Mammary epithelial cell (primary cell): ENCODE measurements at regions of chr4 and their contacts with region 1.

Region 1: GRCh38 chr4:16289897-16290554 is 63.8 kb upstream of the TAPT1 start:
- DNase-seq: no peak
- H3K4me3 ChIP-seq: no peak overlapping the region
- H3K27ac ChIP-seq: no peak overlapping the region
- H3K4me1 ChIP-seq: no peaks in the 10 kb centered on the region
- H3K27me3 ChIP-seq: no peaks in the 10 kb centered on the region
- CTCF ChIP-seq: peak; percentile 53 to 62

Region 2: GRCh38 chr4:16443504-16444088 is 153.6 kb after region 1 on chr4:
- CTCF ChIA-PET with region 1: no interaction called
- dilution Hi-C with region 1: no loop called
- in situ Hi-C with region 1: loop called in 1 of 2 experiments (anchors 10 kb)
- intact Hi-C with region 1: loop called (anchors 1 kb)
- DNase-seq: peak; percentile 12
- H3K4me3 ChIP-seq: no peak overlapping the region
- H3K27ac ChIP-seq: no peak overlapping the region
- H3K4me1 ChIP-seq: no peaks in the 10 kb centered on the region
- H3K27me3 ChIP-seq: no peaks in the 10 kb centered on the region
- CTCF ChIP-seq: peak; percentile 68 to 75

Region 3: GRCh38 chr4:16450724-16451123 is 160.7 kb after region 1 on chr4:
- CTCF ChIA-PET with region 1: no interaction called
- dilution Hi-C with region 1: no loop called
- in situ Hi-C with region 1: loop called in 1 of 2 experiments (anchors 10 kb)
- intact Hi-C with region 1: no loop called
- DNase-seq: no peak
- H3K4me3 ChIP-seq: no peak overlapping the region
- H3K27ac ChIP-seq: no peak overlapping the region
- H3K4me1 ChIP-seq: no peaks in the 10 kb centered on the region
- H3K27me3 ChIP-seq: no peaks in the 10 kb centered on the region
- CTCF ChIP-seq: no peak

Region 4: GRCh38 chr4:17324386-17324830 is 1034.4 kb after region 1 on chr4:
- CTCF ChIA-PET with region 1: no interaction called
- dilution Hi-C with region 1: no loop called
- in situ Hi-C with region 1: loop called in 1 of 2 experiments (anchors 25 kb)
- intact Hi-C with region 1: loop called (anchors 1 kb)
- DNase-seq: no peak
- H3K4me3 ChIP-seq: no peak overlapping the region
- H3K27ac ChIP-seq: no peak overlapping the region
- H3K4me1 ChIP-seq: no peaks in the 10 kb centered on the region
- H3K27me3 ChIP-seq: no peaks in the 10 kb centered on the region
- CTCF ChIP-seq: peak; percentile 40 to 54

Region 5: GRCh38 chr4:17347445-17347844 is 1057.4 kb after region 1 on chr4:
- CTCF ChIA-PET with region 1: no interaction called
- dilution Hi-C with region 1: no loop called
- in situ Hi-C with region 1: loop called in 1 of 2 experiments (anchors 25 kb)
- intact Hi-C with region 1: no loop called
- DNase-seq: peak; percentile 3
- H3K4me3 ChIP-seq: no peak overlapping the region
- H3K27ac ChIP-seq: no peak overlapping the region
- H3K4me1 ChIP-seq: no peaks in the 10 kb centered on the region
- H3K27me3 ChIP-seq: no peaks in the 10 kb centered on the region
- CTCF ChIP-seq: peak; percentile 37 to 61

Region 6: DNA sequence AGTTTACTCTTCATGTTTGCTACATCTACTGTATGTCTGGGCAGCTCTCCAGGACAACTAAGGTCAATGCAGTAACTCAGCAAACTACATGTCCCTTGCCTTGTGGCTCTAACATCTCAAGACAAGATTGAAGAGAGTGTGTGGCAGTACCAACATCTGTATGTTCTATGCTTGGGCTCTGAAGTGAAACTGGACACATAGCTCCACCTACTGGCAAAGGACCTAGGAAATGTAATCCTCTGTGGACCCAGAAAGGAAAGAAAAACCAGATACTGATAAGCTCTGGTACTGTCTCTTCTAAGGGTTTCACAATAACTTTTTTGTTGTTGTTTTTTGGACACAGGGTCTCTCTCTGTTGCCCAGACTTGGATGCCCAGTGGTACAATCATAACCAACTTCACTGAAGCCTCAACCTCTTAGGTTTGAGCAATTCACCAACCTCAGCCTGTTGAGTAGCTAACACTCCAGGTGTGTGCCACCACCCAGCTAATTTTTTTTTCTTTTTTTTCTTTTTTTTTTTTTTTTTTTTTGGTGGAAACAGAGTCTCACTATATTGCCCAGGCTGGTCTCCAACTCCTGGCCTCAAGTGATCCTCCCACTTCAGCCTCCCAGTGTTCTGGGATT is 1157.8 kb after region 1 on chr4:
- CTCF ChIA-PET with region 1: no interaction called
- dilution Hi-C with region 1: no loop called
- in situ Hi-C with region 1: loop called (anchors 10 to 25 kb)
- intact Hi-C with region 1: loop called (anchors 1 kb)
- DNase-seq: peak; percentile 51
- H3K4me3 ChIP-seq: no peak overlapping the region
- H3K27ac ChIP-seq: no peak overlapping the region
- H3K4me1 ChIP-seq: no peaks in the 10 kb centered on the region
- H3K27me3 ChIP-seq: no peaks in the 10 kb centered on the region
- CTCF ChIP-seq: peak; percentile 71 to 81

Region 7: GRCh38 chr4:17468371-17469221 is 1178.6 kb after region 1 on chr4:
- CTCF ChIA-PET with region 1: no interaction called
- dilution Hi-C with region 1: no loop called
- in situ Hi-C with region 1: loop called in 1 of 2 experiments (anchors 25 kb)
- intact Hi-C with region 1: loop called (anchors 5 kb)
- DNase-seq: no peak
- H3K4me3 ChIP-seq: no peak overlapping the region
- H3K27ac ChIP-seq: no peak overlapping the region
- H3K4me1 ChIP-seq: no peaks in the 10 kb centered on the region
- H3K27me3 ChIP-seq: no peaks in the 10 kb centered on the region
- CTCF ChIP-seq: peak; percentile 3 to 40